CD8-positive, alpha-beta T cell (primary cell): ENCODE measurements at regions of chr12 and their contacts with region 1.

Region 1: DNA sequence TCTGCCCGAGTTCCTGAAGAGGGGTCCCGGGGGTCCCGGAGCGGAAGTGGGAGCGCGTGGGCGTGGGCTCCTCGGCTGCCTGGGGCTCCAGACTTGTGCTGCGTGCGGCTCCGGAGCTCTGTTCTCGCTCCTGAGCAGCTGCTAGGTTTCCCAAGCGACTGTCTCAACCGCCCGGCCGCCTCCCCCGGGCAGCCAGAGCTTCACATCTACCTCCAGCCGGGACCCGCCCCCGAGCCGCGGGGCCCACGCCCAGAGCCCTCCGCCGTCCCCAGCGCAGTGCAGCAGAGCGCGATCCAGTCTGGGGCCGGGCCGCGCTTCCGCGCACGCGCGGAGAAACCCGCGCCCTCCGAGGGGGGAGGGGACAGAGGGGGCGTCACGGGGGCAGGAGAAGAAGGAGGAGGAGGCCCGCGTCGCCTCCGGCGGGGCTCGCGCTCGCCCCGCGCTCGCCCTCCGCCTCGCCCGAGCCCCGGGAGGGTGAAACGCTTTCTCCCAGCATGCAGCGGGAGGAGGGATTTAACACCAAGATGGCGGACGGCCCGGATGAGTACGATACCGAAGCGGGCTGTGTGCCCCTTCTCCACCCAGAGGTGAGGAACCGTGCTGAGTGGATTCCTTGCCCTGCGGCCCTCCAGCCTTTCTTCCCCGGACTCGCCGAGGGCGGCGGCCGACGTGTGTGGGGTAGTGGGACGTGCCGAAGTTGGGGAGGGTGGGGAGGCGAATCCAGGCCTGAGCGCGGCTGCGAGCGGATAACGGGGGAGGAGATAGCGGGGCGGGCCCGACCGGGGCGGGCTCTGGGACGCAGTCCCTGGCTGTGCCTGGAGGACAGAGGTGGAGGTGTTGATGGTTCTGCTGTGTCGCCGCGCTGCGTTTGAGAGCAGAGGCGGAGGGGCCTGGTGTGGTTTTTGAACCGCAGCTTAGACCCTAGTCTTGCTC is at the start of gene ZDHHC17:
- DNase-seq: peak; percentile 89 to 96 (median 93)
- ATAC-seq: peak; percentile 82
- H3K4me3 ChIP-seq: peak within 1 kb of the TSS; percentile 73 to 99
- H3K4me3 Mint-ChIP-seq: peak within 1 kb of the TSS; percentile 98
- H3K27ac ChIP-seq: peak within 1 kb of the TSS; percentile 87 to 94
- H3K27ac Mint-ChIP-seq: peak within 1 kb of the TSS; percentile 99
- H3K4me1 ChIP-seq: peaks cover 26% of the 10 kb centered on the region
- H3K4me1 Mint-ChIP-seq: peaks cover 47% of the 10 kb centered on the region
- H3K27me3 ChIP-seq: no peaks in the 10 kb centered on the region
- H3K27me3 Mint-ChIP-seq: no peaks in the 10 kb centered on the region
- CTCF ChIP-seq: no peak
- total RNA-seq, gene ZDHHC17: 38.1 to 40.3 TPM

Region 2: DNA sequence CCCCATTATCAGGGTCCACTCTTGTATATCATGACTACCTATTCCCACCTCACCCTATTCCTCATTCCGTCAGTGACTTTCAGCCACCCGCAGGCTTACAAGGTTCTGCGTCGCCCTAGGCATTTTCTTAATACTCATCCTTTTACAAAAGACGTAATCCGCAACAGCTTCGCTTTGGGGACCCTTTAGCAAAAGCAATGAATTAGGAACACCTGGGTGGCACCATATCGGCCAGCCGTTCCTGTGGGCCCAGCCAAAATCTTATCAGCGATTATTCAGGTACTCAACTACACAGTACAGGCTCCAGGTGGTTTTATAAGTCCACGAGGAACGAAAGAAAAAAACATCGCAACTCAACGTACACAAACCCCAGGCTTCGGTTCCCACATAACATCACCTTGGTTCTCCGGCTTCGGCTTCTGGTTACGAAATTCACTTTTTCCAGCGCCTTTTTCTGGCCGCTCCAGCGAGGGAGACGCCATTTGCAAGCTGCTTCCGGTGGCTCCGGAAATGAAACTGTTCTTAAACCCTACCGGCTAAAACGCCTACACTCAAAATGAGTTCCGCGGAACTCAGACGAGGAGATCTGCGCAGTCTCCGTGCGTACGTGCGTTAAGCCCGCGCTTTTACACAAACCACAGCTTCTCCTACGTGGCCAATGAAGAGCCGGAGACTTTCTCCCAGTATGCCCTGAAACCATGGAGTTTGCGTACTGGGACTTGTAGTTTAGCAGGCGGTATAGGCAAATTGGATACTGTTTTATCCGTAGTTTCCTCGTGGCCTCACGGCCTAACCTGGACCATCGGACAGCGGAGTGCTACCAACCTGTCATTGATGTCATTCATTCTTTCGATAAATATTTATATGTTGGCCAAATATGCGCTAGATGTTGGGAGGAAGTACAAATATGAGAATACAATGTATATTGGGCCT is 1252.6 kb before region 1 on chr12 and contains the start of gene KRR1:
- CTCF ChIA-PET with region 1: no interaction called
- POLR2A ChIA-PET with region 1: no interaction called
- intact Hi-C with region 1: loop called (anchors 2 kb)
- DNase-seq: peak; percentile 75 to 98 (median 88)
- ATAC-seq: peak; percentile 95
- H3K4me3 ChIP-seq: peak within 1 kb of the TSS; percentile 89 to 93
- H3K4me3 Mint-ChIP-seq: peak within 1 kb of the TSS; percentile 98
- H3K27ac ChIP-seq: peak within 1 kb of the TSS; percentile 89
- H3K27ac Mint-ChIP-seq: peak within 1 kb of the TSS; percentile 98
- H3K4me1 ChIP-seq: peaks cover 18% of the 10 kb centered on the region
- H3K4me1 Mint-ChIP-seq: peaks cover 33% of the 10 kb centered on the region
- H3K27me3 ChIP-seq: no peaks in the 10 kb centered on the region
- H3K27me3 Mint-ChIP-seq: no peaks in the 10 kb centered on the region
- CTCF ChIP-seq: no peak
- total RNA-seq, gene KRR1: 158 to 161 TPM

Region 3: DNA sequence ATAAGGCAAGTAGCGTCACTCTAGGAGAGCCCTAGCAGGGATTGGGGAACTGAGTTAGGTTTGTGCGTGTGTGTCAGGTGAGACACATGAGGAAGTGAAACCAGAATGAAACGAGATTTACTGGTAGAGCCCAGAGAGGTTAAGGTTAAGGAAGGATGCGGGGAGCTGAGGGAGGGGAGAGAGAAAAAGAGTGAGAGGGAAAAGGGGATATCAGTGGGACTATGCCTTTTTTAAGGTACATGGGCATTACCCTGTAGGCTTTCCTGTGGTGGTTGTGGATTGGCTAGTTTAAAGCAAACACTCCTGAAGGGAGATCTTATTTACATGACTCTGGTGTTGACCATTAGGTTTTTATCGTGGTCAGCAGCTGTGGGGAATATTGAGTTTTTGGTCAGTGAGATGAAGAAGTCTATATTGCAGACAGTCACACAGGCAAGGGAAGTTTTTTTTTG is 13.8 kb after region 1 on chr12:
- CTCF ChIA-PET with region 1: no interaction called
- POLR2A ChIA-PET with region 1: interaction called, 5 read pairs
- intact Hi-C with region 1: loop called in 1 of 2 experiments (anchors 1 kb)
- DNase-seq: peak in 1 of 9 experiments; percentile 35
- ATAC-seq: peak; percentile 36
- H3K4me3 ChIP-seq: no peak overlapping the region
- H3K4me3 Mint-ChIP-seq: no peak overlapping the region
- H3K27ac ChIP-seq: no peak overlapping the region
- H3K27ac Mint-ChIP-seq: peak overlapping the region; percentile 60
- H3K4me1 ChIP-seq: peaks cover 29% of the 10 kb centered on the region
- H3K4me1 Mint-ChIP-seq: peaks cover 80% of the 10 kb centered on the region
- H3K27me3 ChIP-seq: no peaks in the 10 kb centered on the region
- H3K27me3 Mint-ChIP-seq: no peaks in the 10 kb centered on the region
- CTCF ChIP-seq: no peak